Activated CD8-positive, alpha-beta memory T cell treated with anti-CD3 and anti-CD28 coated beads, Interleukin-2, amount 10 ng/mL, durations not matched to agents 7 days and 5 days (primary cell): ENCODE measurements at regions of chr6 and their contacts with region 1.

Region 1: DNA sequence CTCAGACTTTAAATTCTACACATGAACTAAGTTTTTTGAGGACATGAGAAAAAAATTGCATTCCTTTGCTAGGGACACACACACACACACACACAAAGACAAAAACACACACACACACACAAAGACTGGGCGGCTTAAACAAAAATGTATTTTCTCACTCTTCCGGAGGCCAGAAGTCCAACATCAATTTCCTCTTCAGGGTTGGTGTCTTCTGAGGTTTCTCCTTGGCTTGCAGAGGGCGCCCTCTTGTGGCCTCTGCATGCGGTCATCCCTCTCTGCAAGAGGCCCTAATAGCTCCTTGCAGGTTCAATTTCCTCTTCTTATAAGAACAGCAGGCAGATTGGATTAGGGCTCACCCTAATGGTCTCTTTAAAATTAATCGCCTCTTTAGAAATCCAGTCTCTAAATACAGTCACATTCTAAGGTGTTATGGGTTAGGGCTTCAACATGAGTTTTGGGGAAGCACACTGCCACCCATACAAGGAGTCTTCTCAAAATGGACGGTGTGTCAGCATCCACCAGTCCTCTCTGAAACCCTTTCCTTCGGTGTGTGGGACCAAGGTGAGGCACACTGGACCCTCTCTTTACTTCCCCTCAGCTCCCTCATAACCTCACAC is 61.4 kb downstream of the GPR6 start:
- DNase-seq: peak; percentile 92
- ATAC-seq: peak; percentile 88
- H3K4me3 Mint-ChIP-seq: peak overlapping the region; percentile 77
- H3K27ac Mint-ChIP-seq: peak overlapping the region; percentile 85
- H3K4me1 Mint-ChIP-seq: peaks cover 20% of the 10 kb centered on the region
- H3K27me3 Mint-ChIP-seq: no peaks in the 10 kb centered on the region

Region 2: DNA sequence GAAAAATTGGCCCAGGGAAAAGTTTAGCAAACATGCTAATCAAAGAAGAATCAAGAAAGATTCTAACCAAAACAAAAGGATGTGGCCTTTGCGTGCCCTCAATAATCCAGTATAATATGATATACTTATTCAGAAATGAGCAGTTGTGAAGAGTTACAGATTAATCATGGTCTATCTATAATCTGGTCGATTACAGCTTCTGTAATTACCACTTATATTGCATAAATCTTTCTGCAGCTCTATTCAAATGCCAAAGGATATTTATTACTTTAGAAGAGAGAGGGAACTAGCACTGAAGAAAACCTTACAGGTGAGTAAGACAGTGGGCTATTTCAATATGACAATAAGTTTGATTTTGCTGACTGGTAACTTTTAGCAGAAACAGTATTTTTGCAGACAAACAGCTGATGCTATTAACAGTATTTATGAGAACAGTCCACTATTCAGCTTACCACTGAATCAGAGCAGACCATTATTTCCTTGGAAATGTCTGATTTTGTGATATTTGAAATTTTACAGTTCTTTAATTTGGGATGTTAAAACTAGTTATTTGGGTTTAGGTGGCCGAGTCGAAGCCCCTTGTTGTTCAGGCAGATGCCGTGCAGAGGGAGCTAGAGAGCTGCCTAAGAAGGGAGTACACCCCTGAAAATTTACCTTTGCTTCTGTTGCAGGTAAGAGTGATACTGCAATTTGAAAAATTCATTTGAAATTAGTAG is 851.9 kb before region 1 on chr6:
- CTCF ChIA-PET with region 1: interaction called, 11 read pairs
- DNase-seq: peak; percentile 67
- ATAC-seq: peak; percentile 65
- H3K4me3 Mint-ChIP-seq: no peak overlapping the region
- H3K27ac Mint-ChIP-seq: no peak overlapping the region
- H3K4me1 Mint-ChIP-seq: peaks cover 20% of the 10 kb centered on the region
- H3K27me3 Mint-ChIP-seq: peaks cover 46% of the 10 kb centered on the region

Region 3: GRCh38 chr6:109526905-109527628 is 512.4 kb before region 1 on chr6:
- CTCF ChIA-PET with region 1: interaction called, 44 read pairs
- DNase-seq: peak; percentile 67
- ATAC-seq: peak; percentile 88
- H3K4me3 Mint-ChIP-seq: no peak overlapping the region
- H3K27ac Mint-ChIP-seq: no peak overlapping the region
- H3K4me1 Mint-ChIP-seq: no peaks in the 10 kb centered on the region
- H3K27me3 Mint-ChIP-seq: no peaks in the 10 kb centered on the region

Region 4: GRCh38 chr6:109705258-109705657 is 334.2 kb before region 1 on chr6:
- CTCF ChIA-PET with region 1: interaction called, 173 read pairs
- DNase-seq: peak; percentile 86
- ATAC-seq: peak; percentile 95
- H3K4me3 Mint-ChIP-seq: no peak overlapping the region
- H3K27ac Mint-ChIP-seq: no peak overlapping the region
- H3K4me1 Mint-ChIP-seq: peaks cover 10% of the 10 kb centered on the region
- H3K27me3 Mint-ChIP-seq: no peaks in the 10 kb centered on the region

Region 5: DNA sequence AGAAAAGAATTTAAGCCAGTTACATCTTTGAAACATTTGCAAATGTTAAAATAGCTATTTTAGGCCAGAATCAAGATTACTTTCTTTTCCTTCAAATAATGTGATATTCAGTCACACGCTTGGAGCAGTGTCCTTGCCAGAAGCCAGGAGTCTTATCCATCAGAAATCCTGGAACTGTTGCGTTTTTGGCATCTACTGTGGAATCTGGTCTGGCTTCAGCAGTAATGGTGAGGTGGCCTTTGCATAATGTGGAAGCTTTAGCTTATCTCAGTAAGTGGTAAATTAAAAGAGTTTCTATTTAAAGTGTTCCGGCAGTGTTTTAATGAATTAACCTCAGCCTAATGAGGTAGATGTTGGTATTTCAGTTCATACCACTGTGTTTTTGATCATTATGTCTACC is 250.8 kb before region 1 on chr6:
- CTCF ChIA-PET with region 1: interaction called, 10 read pairs
- DNase-seq: no peak
- ATAC-seq: no peak
- H3K4me3 Mint-ChIP-seq: no peak overlapping the region
- H3K27ac Mint-ChIP-seq: no peak overlapping the region
- H3K4me1 Mint-ChIP-seq: peaks cover 8% of the 10 kb centered on the region
- H3K27me3 Mint-ChIP-seq: no peaks in the 10 kb centered on the region

Region 6: GRCh38 chr6:109892436-109893435 is 146.7 kb before region 1 on chr6:
- CTCF ChIA-PET with region 1: no interaction called
- DNase-seq: no peak
- ATAC-seq: no peak
- H3K4me3 Mint-ChIP-seq: no peak overlapping the region
- H3K27ac Mint-ChIP-seq: no peak overlapping the region
- H3K4me1 Mint-ChIP-seq: no peaks in the 10 kb centered on the region
- H3K27me3 Mint-ChIP-seq: peaks cover 14% of the 10 kb centered on the region

Region 7: DNA sequence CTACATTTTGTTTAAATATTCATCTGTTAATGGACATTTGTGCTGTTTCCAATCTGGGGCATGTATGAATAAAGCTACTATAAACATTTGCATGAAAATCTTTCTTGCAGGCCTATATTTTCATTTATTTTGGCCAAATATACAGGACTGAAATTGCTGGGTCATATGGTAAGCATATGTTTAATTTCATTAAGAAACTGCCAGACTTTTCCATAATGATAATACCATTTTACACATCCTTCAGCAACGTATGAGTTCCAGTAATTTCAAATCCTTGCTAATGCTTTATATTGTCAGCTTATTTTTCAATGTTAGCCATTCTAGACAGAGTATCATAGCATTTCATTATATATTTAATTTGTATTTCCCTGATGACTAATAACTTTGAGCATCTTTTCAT is 10.3 kb before region 1 on chr6:
- CTCF ChIA-PET with region 1: interaction called, 45 read pairs
- DNase-seq: no peak
- ATAC-seq: no peak
- H3K4me3 Mint-ChIP-seq: no peak overlapping the region
- H3K27ac Mint-ChIP-seq: no peak overlapping the region
- H3K4me1 Mint-ChIP-seq: no peaks in the 10 kb centered on the region
- H3K27me3 Mint-ChIP-seq: no peaks in the 10 kb centered on the region

Region 8: GRCh38 chr6:110179401-110180227 is 140.1 kb after region 1 on chr6 and contains the start of gene WASF1:
- CTCF ChIA-PET with region 1: interaction called, 10 read pairs
- DNase-seq: peak; percentile 94
- ATAC-seq: peak; percentile 92
- H3K4me3 Mint-ChIP-seq: no peak within 1 kb of the TSS
- H3K27ac Mint-ChIP-seq: peak within 1 kb of the TSS; percentile 61
- H3K4me1 Mint-ChIP-seq: peaks cover 7% of the 10 kb centered on the region
- H3K27me3 Mint-ChIP-seq: peaks cover 19% of the 10 kb centered on the region
- total RNA-seq, gene WASF1: 0.47 to 1.5 TPM